GM23248 (cell line): ENCODE measurements at regions of chr1 and their contacts with region 1.

Region 1: DNA sequence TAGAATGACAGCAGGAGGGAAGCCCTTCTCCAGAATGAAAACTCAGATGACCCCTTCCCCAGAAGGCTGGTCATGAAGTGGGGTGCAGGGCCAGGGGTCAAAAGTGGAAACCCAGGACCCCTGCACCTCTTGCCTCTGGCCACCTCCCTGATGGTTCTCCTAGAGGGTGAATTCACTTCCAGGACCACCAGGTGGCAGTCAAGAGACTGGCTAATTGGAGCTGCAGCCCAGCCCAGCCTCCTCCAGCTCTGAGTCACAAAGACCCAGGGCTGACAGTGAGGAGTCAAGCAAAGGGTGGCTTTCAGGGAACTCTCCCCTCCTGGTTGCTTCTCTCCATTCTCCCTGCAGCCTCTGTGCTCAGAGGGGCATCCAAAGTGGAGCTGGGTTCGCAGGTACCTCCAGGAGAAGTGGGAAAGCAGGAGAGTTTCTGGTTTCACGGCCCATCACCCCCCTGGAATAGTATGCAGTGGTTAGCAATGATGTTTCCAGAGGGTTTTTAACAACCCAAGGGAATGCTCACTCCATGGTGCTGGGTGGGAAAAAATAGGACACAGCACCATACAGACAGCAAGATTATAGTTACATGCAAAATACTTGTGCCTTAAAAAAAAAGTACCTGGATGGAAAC is 6.1 kb upstream of the EPHB2 start:
- DNase-seq: peak; percentile 93
- H3K4me3 ChIP-seq: no peak overlapping the region
- H3K27ac ChIP-seq: no peak overlapping the region
- H3K4me1 ChIP-seq: no peaks in the 10 kb centered on the region
- H3K27me3 ChIP-seq: no peaks in the 10 kb centered on the region; the same call in 1 of the 2 replicates

Region 2: GRCh38 chr1:22889213-22889827 is 184.8 kb after region 1 on chr1:
- in situ Hi-C with region 1: loop called (anchors 10 kb)
- DNase-seq: peak; percentile 66
- H3K4me3 ChIP-seq: no peak overlapping the region
- H3K27ac ChIP-seq: no peak overlapping the region
- H3K4me1 ChIP-seq: peaks cover 13% of the 10 kb centered on the region
- H3K27me3 ChIP-seq: no peaks in the 10 kb centered on the region